Natural killer cell (primary cell): ENCODE measurements at regions of chr21 and their contacts with region 1.

Region 1: DNA sequence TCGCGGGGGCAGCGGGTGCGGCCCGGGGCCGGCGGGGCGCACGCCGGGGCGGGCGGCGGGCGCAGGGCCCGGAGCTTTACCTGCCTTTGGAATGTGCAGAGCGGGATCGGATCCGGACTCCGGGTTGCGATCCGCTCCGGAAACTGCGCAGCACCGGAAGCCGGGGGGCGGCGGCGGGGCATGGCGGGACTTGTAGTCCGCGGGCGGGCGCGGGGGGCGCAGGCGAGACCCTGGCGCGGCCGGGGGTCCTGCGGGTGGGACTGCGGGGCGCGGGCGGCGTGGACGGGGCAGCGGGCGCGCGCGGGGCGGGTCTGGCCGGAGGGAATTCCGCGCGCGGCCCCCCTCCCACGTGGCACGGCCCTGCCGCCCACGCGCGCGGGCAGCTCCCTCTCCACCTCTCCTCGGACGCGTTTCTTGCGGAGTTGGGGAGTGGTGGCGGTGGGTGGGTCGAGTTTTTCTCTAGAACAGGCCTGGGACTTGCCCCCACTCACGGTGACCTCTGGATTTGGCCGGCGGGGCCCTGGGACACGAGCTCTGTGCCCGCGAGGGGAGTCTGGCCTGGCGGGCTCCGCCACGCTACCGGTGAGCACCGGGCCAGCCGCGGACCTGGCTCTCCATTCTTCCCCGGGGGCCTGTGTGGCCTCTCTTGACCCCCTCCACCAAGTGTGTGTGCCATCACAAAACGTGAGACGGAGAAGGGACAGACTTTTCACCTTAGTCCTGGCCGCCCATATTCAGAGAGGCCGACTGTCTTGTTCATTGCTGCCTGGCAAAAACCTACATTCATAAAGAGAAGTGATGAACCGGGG is at the start of gene PRDM15:
- DNase-seq: peak; percentile 78 to 85
- ATAC-seq: peak; percentile 81 to 85 (median 82)
- H3K4me3 ChIP-seq: peak within 1 kb of the TSS; percentile 83
- H3K4me3 Mint-ChIP-seq: peak within 1 kb of the TSS; percentile 92
- H3K27ac ChIP-seq: peak within 1 kb of the TSS; percentile 64
- H3K27ac Mint-ChIP-seq: peak within 1 kb of the TSS; percentile 83 to 87
- H3K4me1 ChIP-seq: peaks cover 18% of the 10 kb centered on the region
- H3K4me1 Mint-ChIP-seq: peaks cover 23 to 33% of the 10 kb centered on the region in 2 donors
- H3K27me3 ChIP-seq: no peaks in the 10 kb centered on the region
- H3K27me3 Mint-ChIP-seq: peaks cover 0 to 3% of the 10 kb centered on the region in 2 donors
- CTCF ChIP-seq: no peak
- total RNA-seq, gene PRDM15: 11.4 to 13.5 (median 11.9) TPM

Region 2: GRCh38 chr21:41865002-41865777 is 14.2 kb before region 1 on chr21:
- intact Hi-C with region 1: no loop called
- DNase-seq: no peak
- ATAC-seq: peak in 2 of 3 donors; percentile 58 to 76
- H3K4me3 ChIP-seq: no peak overlapping the region
- H3K4me3 Mint-ChIP-seq: peak overlapping the region; percentile 54
- H3K27ac ChIP-seq: no peak overlapping the region
- H3K27ac Mint-ChIP-seq: peak overlapping the region in 1 of 2 donors; percentile 61
- H3K4me1 ChIP-seq: peaks cover 10% of the 10 kb centered on the region
- H3K4me1 Mint-ChIP-seq: peaks cover 23 to 27% of the 10 kb centered on the region in 2 donors
- H3K27me3 ChIP-seq: no peaks in the 10 kb centered on the region
- H3K27me3 Mint-ChIP-seq: no peaks in the 10 kb centered on the region
- CTCF ChIP-seq: no peak

Region 3: DNA sequence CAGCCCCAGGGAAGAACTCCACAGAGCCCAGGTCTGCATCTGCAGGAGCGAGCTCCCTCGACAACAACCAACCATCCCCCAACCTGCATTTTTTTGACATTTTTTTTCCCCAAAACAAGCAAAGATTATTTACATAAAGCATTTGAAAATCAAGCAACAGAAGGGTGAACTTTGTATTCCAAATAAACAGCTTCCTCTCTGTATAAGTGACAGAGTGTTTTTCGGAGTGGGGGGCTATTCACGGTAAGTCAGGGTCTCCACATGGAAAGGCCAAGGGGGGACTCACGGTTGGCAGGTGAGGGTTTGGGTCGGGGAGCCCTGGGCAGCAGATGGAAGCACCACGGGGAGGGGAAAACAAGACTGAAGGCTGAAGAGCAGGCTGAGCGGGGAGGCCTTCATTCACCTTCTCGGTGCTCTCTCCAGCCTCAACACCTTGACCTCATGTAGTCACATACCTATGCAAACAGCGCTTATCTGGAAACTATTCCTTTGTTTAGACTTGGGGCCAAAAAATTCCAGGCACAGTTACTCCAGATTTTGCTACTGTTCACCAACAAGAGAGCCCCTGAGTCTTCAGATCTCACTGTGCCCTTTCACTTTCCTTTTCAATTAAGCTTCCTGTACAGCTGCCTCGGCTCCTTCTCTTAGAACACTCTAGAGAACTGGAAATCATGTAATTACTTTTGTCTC is 46.9 kb after region 1 on chr21:
- intact Hi-C with region 1: loop called (anchors 5 kb)
- DNase-seq: peak; percentile 21 to 78
- ATAC-seq: peak; percentile 79 to 81 (median 80)
- H3K4me3 ChIP-seq: peak overlapping the region; percentile 43
- H3K4me3 Mint-ChIP-seq: peak overlapping the region; percentile 93
- H3K27ac ChIP-seq: peak overlapping the region; percentile 89
- H3K27ac Mint-ChIP-seq: peak overlapping the region; percentile 95 to 100
- H3K4me1 ChIP-seq: peaks cover 50% of the 10 kb centered on the region
- H3K4me1 Mint-ChIP-seq: peaks cover 33 to 55% of the 10 kb centered on the region in 2 donors
- H3K27me3 ChIP-seq: no peaks in the 10 kb centered on the region
- H3K27me3 Mint-ChIP-seq: no peaks in the 10 kb centered on the region
- CTCF ChIP-seq: no peak

Region 4: GRCh38 chr21:42009831-42010523 is 130.6 kb after region 1 on chr21 and contains the start of gene ZBTB21:
- intact Hi-C with region 1: loop called (anchors 5 kb)
- DNase-seq: peak; percentile 96 to 100
- ATAC-seq: peak; percentile 75 to 89 (median 79)
- H3K4me3 ChIP-seq: peak within 1 kb of the TSS; percentile 97
- H3K4me3 Mint-ChIP-seq: peak within 1 kb of the TSS; percentile 94
- H3K27ac ChIP-seq: peak within 1 kb of the TSS; percentile 100
- H3K27ac Mint-ChIP-seq: peak within 1 kb of the TSS; percentile 95 to 98
- H3K4me1 ChIP-seq: peaks cover 15% of the 10 kb centered on the region
- H3K4me1 Mint-ChIP-seq: peaks cover 6 to 20% of the 10 kb centered on the region in 2 donors
- H3K27me3 ChIP-seq: no peaks in the 10 kb centered on the region
- H3K27me3 Mint-ChIP-seq: peaks cover 0 to 11% of the 10 kb centered on the region in 2 donors
- CTCF ChIP-seq: no peak
- total RNA-seq, gene ZBTB21: 78.2 to 113 (median 100) TPM

Region 5: DNA sequence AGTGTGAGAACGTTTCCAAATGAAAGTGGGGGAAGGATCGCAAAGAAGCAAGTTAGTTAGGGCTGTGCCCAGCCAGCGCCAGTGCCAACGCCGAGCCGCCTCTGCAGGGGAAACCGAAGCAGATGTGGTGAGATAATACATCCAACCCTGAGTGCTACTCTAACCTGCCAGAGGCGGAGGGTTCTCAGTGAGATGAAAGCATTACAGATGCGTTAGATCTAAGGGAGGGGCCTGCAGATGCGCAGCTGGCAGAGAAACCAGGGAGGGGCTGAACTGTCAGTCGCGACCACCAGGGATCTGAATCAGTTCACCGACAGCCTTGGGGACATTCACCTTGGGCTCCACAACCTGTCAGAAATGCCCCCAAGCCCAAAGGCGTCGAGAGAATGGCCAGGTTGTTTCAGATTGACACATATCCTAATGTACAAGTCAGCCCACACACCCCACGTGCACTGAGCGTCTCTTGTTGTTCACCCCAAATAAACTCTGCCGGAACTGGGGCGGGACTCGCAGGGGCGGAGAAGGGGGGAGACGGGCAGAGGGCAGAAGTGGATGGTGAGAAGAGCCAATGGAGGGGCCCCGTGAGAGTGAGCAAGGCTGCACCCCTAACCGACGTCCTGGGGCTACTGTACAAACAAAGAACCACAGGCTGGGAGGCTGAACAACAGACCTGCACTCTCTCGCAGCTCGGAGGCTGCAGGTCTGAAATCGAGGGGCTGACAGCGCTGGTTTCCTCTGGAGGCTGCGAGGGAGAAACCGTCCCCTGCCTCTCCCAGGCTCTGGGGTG is 183.0 kb after region 1 on chr21:
- intact Hi-C with region 1: loop called (anchors 5 kb)
- DNase-seq: peak; percentile 62 to 95
- ATAC-seq: peak; percentile 86 to 90 (median 89)
- H3K4me3 ChIP-seq: peak overlapping the region; percentile 24
- H3K4me3 Mint-ChIP-seq: peak overlapping the region; percentile 88
- H3K27ac ChIP-seq: peak overlapping the region; percentile 71
- H3K27ac Mint-ChIP-seq: peak overlapping the region; percentile 46 to 86
- H3K4me1 ChIP-seq: peaks cover 45% of the 10 kb centered on the region
- H3K4me1 Mint-ChIP-seq: peaks cover 30 to 38% of the 10 kb centered on the region in 2 donors
- H3K27me3 ChIP-seq: peaks cover 11% of the 10 kb centered on the region
- H3K27me3 Mint-ChIP-seq: peaks cover 44 to 69% of the 10 kb centered on the region in 2 donors
- CTCF ChIP-seq: no peak